BJ (cell line): ENCODE measurements at regions of chr2 and their contacts with region 1.

Region 1: DNA sequence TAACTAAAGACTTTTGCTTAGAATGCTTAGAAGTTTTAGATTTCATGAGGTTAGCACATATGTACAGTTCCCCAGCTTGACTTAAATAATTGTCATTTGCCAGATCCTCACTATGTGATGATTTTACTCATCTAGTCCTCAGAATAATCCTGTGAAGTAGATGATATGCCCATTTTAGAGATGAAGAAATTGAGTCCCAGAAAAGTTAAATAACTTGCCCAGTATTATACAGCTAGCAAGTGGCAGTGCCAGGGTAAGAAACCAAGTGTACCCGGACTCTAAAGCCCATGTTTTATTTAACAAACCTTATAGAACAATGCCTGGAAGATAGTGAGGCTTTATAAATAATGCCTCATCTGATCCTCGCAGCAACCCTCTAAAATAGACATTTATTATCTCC is 28.3 kb downstream of the SPDYA start:
- DNase-seq: no peak
- H3K4me3 ChIP-seq: no peak overlapping the region
- H3K27me3 ChIP-seq: no peaks in the 10 kb centered on the region
- CTCF ChIP-seq: no peak

Region 2: GRCh38 chr2:28649481-28650214 is 189.3 kb before region 1 on chr2:
- CTCF ChIA-PET with region 1: no interaction called
- POLR2A ChIA-PET with region 1: no interaction called
- DNase-seq: no peak
- H3K4me3 ChIP-seq: no peak overlapping the region
- H3K27me3 ChIP-seq: no peaks in the 10 kb centered on the region
- CTCF ChIP-seq: no peak

Region 3: GRCh38 chr2:28751252-28751955 is 87.6 kb before region 1 on chr2 and contains the start of gene PPP1CB:
- CTCF ChIA-PET with region 1: no interaction called
- POLR2A ChIA-PET with region 1: no interaction called
- DNase-seq: peak; percentile 82
- H3K4me3 ChIP-seq: peak within 1 kb of the TSS; percentile 99
- H3K27me3 ChIP-seq: no peaks in the 10 kb centered on the region
- CTCF ChIP-seq: peak; percentile 27; the same call in 1 of the 2 replicates
- polyA plus RNA-seq, gene PPP1CB: 45.2 and 75.4 TPM in 2 replicates

Region 4: GRCh38 chr2:28821295-28821958 is 17.5 kb before region 1 on chr2:
- CTCF ChIA-PET with region 1: interaction called, 12 read pairs
- POLR2A ChIA-PET with region 1: no interaction called
- DNase-seq: no peak
- H3K4me3 ChIP-seq: no peak overlapping the region
- H3K27me3 ChIP-seq: no peaks in the 10 kb centered on the region
- CTCF ChIP-seq: peak; percentile 72